PC-9 (cell line): ENCODE measurements at regions of chr7 and their contacts with region 1.

Region 1: DNA sequence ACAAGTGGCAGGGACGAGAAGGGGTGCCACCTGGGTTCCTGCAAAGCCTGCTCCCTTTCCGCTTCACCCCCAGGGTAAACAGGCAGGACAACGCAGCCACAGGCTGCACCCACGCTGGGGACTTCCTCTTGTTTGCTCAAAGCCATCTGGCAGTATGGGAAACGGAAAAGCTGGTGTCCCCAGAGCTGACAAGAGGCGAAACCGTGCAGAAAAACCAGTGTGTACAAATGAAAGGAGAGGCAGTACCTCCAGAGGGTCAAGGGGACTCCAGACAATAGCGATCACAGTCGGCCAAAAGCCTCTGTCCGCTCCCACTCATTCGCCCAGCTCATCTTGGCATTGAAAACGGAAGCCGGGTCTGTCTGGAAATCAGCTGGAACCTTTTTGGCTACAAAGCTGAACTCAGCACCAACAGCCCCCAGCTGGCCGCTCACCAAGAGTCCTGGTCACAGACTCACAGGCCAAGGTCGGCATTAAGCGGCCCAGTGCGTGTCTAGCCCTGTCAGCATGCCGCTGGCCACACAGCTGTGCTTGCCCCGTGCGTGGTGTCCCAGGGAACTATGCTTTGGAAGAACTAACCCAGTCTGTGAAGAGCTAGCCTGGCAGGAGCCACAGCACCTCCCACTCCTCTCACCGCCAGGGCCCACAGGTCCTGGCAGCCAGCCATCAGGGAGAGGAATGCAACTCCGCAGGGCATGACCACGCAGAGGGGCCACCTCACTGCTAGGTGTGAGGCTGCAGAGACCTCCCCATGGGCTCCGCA is 10.4 kb downstream of the TNS3 start:
- DNase-seq: peak in 1 of 2 experiments; percentile 91
- H3K4me3 ChIP-seq: no peak overlapping the region
- H3K27ac ChIP-seq: no peak overlapping the region
- H3K4me1 ChIP-seq: peaks cover 47% of the 10 kb centered on the region
- H3K27me3 ChIP-seq: no peaks in the 10 kb centered on the region
- CTCF ChIP-seq: no peak

Region 2: DNA sequence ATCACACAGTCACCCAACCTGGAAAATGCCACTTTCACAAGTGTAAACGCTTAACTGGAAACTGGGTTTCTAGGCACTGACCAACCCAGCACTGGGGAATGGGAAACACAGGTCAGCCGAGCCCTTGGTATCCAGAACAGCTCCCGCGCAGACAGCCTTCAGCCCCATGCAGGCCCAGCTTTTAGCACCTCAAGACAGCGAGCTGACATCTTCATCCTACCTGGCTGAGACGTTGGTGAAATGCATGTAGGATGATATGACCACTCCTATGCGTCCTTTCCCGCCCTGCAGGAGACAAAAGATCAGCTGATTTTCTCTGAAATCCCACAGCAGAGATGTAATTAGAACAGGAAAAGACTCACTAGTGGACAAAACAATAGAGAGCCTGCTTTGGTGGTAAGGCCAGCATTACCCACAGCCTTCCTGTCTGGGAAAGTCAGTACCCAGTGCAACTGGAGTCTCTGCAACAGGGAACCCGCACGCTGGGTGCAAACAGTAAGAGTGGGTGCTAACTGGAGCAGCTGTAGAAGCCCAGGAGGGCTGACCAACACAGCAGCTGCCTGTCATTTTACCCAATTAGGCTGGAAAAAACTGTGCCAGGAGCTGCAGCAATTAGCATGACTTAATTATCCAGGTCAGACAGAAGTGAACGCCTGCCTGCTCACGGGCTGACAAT is 143.3 kb before region 1 on chr7:
- CTCF ChIA-PET with region 1: no interaction called
- POLR2A ChIA-PET with region 1: no interaction called
- intact Hi-C with region 1: no loop called
- DNase-seq: no peak
- H3K4me3 ChIP-seq: no peak overlapping the region
- H3K27ac ChIP-seq: no peak overlapping the region
- H3K4me1 ChIP-seq: no peaks in the 10 kb centered on the region
- H3K27me3 ChIP-seq: no peaks in the 10 kb centered on the region
- CTCF ChIP-seq: no peak

Region 3: DNA sequence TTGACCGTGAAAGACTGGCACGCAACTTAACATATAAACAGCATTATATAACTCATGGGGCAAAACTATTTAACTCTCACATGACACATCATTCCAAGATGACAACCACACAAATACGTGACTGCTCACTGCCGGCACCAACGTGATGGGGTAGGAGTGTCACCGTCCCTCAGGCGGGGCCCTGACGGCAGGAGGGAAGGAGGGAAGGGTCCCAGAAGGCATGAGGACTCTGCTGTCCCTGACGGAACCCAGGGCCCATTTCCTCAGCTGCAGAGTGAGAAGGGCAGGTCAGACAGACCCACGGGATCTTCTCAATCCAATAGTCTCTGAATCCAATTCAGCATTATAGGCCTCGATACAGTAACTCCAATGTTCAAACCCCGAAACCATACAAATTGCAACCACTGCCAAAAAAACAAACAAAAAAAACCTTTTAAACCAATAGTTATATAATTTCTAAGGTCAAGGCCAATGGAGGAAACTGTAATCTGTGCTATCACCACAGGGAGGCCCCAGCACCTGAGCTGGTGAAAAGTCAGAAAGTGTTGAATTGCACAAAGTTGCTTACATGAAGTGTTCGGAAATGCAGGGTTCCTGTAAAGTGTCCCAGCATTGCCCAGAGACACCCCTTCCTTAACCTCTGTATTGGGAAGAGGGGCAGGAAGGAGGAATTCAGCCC is 127.0 kb before region 1 on chr7:
- CTCF ChIA-PET with region 1: no interaction called
- POLR2A ChIA-PET with region 1: interaction called, 36 read pairs
- intact Hi-C with region 1: loop called (anchors 10 kb)
- DNase-seq: no peak
- H3K4me3 ChIP-seq: no peak overlapping the region
- H3K27ac ChIP-seq: no peak overlapping the region
- H3K4me1 ChIP-seq: peaks cover 91% of the 10 kb centered on the region
- H3K27me3 ChIP-seq: no peaks in the 10 kb centered on the region
- CTCF ChIP-seq: peak; percentile 60

Region 4: DNA sequence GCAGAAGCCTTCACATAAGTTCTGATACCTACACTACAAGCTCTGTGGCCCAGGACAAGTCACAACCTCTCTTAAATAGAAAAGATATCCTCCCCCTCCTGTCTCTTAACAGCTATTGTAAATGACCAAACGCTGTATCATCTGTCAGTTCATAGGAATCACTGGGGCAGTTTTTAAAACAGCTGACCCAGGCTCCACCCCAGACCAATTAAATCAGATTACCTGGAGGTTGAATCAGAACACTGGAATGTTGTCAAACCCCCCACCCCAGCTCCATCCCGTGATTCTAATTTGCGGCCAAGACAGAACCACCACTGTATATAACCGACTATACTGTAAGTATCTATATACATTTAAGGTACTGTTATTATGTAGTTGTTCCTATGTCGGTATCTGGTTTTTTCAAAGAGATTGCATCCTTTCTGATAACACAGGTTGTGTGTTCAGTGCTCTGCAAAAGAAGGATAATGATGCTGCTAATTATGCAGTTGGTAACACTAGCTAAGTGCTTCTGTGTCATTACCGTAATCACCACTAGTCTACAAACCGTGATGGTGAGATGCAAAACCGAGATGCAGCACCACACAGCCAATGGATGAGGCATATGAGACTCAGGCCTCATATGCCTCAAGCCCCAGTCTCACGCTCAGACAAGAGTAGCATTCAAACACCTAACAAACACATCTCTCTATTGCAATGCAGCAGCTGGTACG is 37.0 kb before region 1 on chr7:
- CTCF ChIA-PET with region 1: no interaction called
- POLR2A ChIA-PET with region 1: no interaction called
- intact Hi-C with region 1: loop called (anchors 1 kb)
- DNase-seq: peak; percentile 76 to 89
- H3K4me3 ChIP-seq: no peak overlapping the region
- H3K27ac ChIP-seq: peak overlapping the region; percentile 52
- H3K4me1 ChIP-seq: peaks cover 84% of the 10 kb centered on the region
- H3K27me3 ChIP-seq: no peaks in the 10 kb centered on the region
- CTCF ChIP-seq: peak; percentile 62

Region 5: DNA sequence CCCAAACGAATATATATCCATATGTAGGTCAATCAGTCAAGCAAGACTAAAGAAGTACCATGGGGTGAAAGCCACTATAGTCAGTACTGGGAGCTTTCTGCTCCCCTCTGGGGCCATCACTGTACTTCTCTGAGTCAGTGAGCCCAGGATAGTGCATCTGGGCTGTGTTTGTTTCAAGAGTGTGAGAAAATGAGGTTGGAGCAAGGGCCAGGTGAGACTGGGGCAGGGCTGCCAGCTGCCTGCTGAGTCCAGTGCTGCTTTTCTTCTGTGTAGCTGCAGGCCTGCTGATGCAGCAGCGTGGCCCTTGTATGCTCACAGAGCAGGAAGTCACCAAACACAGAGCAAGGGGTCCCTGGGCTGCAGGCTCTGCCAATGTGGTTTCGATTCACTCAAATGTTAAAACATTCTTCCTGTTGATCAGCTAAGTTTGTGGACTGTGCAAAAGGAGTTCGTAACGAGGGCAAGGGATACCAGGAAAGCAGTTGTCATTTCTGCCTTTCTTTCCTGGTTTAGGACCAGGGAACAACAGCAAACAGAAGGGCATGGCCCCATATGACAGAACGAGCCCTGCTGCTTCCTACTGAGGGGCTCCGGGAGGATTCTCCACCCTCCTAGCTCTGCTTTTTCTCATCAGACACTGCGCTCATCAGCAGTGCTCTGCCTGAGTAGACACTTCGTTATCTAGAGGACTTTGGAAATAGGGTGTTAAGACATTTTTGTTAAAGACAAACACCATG is 75.8 kb after region 1 on chr7:
- CTCF ChIA-PET with region 1: no interaction called
- POLR2A ChIA-PET with region 1: no interaction called
- intact Hi-C with region 1: loop called (anchors 1 kb)
- DNase-seq: no peak
- H3K4me3 ChIP-seq: no peak overlapping the region
- H3K27ac ChIP-seq: no peak overlapping the region
- H3K4me1 ChIP-seq: peaks cover 29% of the 10 kb centered on the region
- H3K27me3 ChIP-seq: no peaks in the 10 kb centered on the region
- CTCF ChIP-seq: no peak

Region 6: DNA sequence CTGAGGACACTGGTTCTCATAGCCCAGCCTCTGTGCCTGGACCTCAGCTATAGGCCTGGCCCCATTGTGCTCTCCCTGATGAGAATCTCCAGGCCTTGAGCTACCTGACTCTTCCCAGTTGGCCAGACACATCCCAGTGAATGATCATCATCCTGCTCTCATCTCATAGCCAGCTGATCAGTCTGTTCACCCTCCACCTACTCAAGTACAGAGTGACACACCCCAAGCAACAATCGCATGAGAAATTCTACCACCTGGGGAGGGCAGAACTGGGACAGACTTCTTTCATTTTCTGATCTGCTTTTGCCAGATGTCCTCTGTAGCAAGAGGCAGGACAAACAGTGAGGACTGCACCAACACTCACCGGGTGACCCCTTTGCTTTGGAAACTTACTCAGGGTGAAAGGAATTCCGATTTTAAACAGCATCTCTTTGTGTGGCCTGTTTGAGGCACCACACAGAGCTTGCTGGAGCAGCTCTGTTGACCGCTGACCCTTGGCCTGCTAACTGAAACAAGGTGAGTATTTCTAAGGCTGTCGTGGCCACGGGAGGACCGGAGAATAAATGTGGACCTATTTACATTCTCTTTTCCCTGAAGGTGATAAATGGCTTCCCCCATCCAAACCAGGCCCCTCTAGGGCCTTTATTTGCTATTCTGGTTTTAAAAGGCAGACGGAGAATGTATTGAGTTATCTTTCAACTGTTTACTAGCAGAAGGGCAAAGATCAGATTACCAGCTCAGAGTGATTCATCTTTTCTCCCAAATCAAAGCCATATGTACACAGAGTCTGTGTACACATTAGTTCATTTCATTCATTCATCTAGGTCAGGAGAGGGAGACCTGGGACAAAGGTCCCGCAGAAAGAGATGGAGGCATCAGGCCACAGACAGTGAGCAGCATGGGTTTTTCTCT is 191.8 kb after region 1 on chr7:
- CTCF ChIA-PET with region 1: interaction called, 4 read pairs
- POLR2A ChIA-PET with region 1: interaction called, 6 read pairs
- intact Hi-C with region 1: loop called (anchors 1 kb)
- DNase-seq: peak; percentile 82 to 100
- H3K4me3 ChIP-seq: peak overlapping the region; percentile 5; the same call in 1 of the 2 replicates
- H3K27ac ChIP-seq: peak overlapping the region; percentile 95
- H3K4me1 ChIP-seq: peaks cover 69% of the 10 kb centered on the region
- H3K27me3 ChIP-seq: no peaks in the 10 kb centered on the region
- CTCF ChIP-seq: no peak

Region 7: DNA sequence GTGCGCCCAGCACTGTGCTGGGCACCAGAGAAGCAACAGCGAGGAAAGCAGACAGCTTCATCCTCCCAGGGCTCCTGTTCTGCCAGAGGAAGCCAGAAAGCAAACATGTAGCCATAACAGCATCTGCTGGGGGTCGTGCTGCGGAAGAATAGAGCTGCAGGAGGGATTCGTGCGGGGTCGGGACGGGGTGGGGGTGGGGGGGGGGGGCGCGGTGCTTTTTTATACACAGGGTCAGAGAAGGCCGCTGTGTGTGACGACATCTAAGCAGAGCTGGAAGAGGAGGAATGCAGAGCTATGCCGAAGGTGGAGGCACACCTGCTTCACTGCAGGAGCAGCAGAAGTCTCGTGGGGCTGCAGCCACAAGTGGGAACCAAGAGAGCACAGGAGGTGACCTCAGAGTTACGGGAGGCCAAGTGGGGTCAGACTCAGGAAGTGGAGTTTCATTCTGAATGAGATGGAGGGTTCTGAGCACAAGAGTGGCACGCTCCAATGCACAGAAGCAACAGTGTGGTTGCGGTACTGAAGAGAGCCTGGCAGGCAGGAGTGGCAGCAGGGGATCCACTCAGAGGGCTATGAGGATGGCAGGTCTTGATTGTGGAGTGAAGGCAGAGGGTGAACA is 365.7 kb after region 1 on chr7:
- CTCF ChIA-PET with region 1: no interaction called
- POLR2A ChIA-PET with region 1: no interaction called
- intact Hi-C with region 1: loop called (anchors 1 kb)
- DNase-seq: no peak
- H3K4me3 ChIP-seq: no peak overlapping the region
- H3K27ac ChIP-seq: no peak overlapping the region
- H3K4me1 ChIP-seq: peaks cover 19% of the 10 kb centered on the region
- H3K27me3 ChIP-seq: no peaks in the 10 kb centered on the region
- CTCF ChIP-seq: no peak

Region 8: DNA sequence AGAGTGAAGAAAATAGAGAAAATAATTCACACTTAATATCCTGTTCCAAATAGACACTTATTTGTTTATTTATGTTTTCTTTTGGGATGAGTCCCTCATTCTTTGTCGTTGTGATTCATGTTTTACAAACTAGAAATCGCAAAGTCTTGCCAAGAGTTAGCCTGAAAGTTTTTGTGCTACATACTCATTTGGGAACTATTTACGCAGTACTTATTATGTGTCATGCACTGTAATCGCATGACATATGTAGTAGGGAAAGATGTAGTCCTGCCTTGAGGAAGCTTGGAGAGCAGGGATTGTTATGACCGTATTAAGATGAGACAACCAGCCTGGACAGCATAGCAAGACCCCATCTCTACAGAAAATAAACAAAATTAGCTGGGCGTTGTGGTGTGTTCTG is 789.1 kb after region 1 on chr7:
- CTCF ChIA-PET with region 1: no interaction called
- POLR2A ChIA-PET with region 1: no interaction called
- intact Hi-C with region 1: no loop called
- DNase-seq: no peak
- H3K4me3 ChIP-seq: no peak overlapping the region
- H3K27ac ChIP-seq: no peak overlapping the region
- H3K4me1 ChIP-seq: no peaks in the 10 kb centered on the region
- H3K27me3 ChIP-seq: peaks cover 21% of the 10 kb centered on the region
- CTCF ChIP-seq: no peak